ENCODE measurements at regions of chr22 and their contacts with region 1.

Region 1: GRCh38 chr22:20885557-20886323 is 26.9 kb downstream of the SNAP29 start:
- DNase-seq: peak; percentile 69 to 90
- H3K4me3 ChIP-seq: no peak overlapping the region
- H3K27ac ChIP-seq: no peak overlapping the region
- H3K4me1 ChIP-seq: peaks cover 0 to 2% (median 0%) of the 10 kb centered on the region in 4 experiments; a peak in 1 of 7 replicates
- H3K27me3 ChIP-seq: no peaks in the 10 kb centered on the region
- CTCF ChIP-seq: peak; percentile 97 to 100 (median 100)
- EP300 ChIP-seq: no peak
- POLR2A ChIP-seq: no peak
- RAD21 ChIP-seq: peak; percentile 95

Region 2: GRCh38 chr22:20803696-20804324 is 81.9 kb before region 1 on chr22:
- CTCF ChIA-PET with region 1: interaction called, 13 read pairs
- POLR2A ChIA-PET with region 1: no interaction called
- DNase-seq: peak; percentile 29 to 71
- H3K4me3 ChIP-seq: no peak overlapping the region
- H3K27ac ChIP-seq: no peak overlapping the region
- H3K4me1 ChIP-seq: no peaks in the 10 kb centered on the region; a peak in 1 of 7 replicates
- H3K27me3 ChIP-seq: no peaks in the 10 kb centered on the region
- CTCF ChIP-seq: peak; percentile 79 to 89 (median 80)
- EP300 ChIP-seq: no peak
- POLR2A ChIP-seq: no peak
- RAD21 ChIP-seq: peak; percentile 86 to 92

Region 3: GRCh38 chr22:20833225-20833665 is 52.5 kb before region 1 on chr22:
- CTCF ChIA-PET with region 1: no interaction called
- POLR2A ChIA-PET with region 1: no interaction called
- DNase-seq: no peak
- H3K4me3 ChIP-seq: no peak overlapping the region
- H3K27ac ChIP-seq: no peak overlapping the region
- H3K4me1 ChIP-seq: no peaks in the 10 kb centered on the region
- H3K27me3 ChIP-seq: no peaks in the 10 kb centered on the region
- CTCF ChIP-seq: no peak
- EP300 ChIP-seq: no peak
- POLR2A ChIP-seq: no peak
- RAD21 ChIP-seq: no peak

Region 4: GRCh38 chr22:20873214-20873613 is 12.5 kb before region 1 on chr22:
- CTCF ChIA-PET with region 1: interaction called, 21 read pairs
- POLR2A ChIA-PET with region 1: interaction called, 3 read pairs
- DNase-seq: no peak
- H3K4me3 ChIP-seq: no peak overlapping the region
- H3K27ac ChIP-seq: no peak overlapping the region
- H3K4me1 ChIP-seq: no peaks in the 10 kb centered on the region
- H3K27me3 ChIP-seq: no peaks in the 10 kb centered on the region
- CTCF ChIP-seq: no peak
- EP300 ChIP-seq: no peak
- POLR2A ChIP-seq: no peak
- RAD21 ChIP-seq: no peak

Region 5: GRCh38 chr22:20912494-20912893 is 26.8 kb after region 1 on chr22:
- CTCF ChIA-PET with region 1: interaction called, 22 read pairs
- POLR2A ChIA-PET with region 1: interaction called, 3 read pairs
- DNase-seq: no peak
- H3K4me3 ChIP-seq: no peak overlapping the region
- H3K27ac ChIP-seq: no peak overlapping the region
- H3K4me1 ChIP-seq: no peaks in the 10 kb centered on the region
- H3K27me3 ChIP-seq: no peaks in the 10 kb centered on the region
- CTCF ChIP-seq: no peak
- EP300 ChIP-seq: no peak
- POLR2A ChIP-seq: no peak
- RAD21 ChIP-seq: no peak

Region 6: DNA sequence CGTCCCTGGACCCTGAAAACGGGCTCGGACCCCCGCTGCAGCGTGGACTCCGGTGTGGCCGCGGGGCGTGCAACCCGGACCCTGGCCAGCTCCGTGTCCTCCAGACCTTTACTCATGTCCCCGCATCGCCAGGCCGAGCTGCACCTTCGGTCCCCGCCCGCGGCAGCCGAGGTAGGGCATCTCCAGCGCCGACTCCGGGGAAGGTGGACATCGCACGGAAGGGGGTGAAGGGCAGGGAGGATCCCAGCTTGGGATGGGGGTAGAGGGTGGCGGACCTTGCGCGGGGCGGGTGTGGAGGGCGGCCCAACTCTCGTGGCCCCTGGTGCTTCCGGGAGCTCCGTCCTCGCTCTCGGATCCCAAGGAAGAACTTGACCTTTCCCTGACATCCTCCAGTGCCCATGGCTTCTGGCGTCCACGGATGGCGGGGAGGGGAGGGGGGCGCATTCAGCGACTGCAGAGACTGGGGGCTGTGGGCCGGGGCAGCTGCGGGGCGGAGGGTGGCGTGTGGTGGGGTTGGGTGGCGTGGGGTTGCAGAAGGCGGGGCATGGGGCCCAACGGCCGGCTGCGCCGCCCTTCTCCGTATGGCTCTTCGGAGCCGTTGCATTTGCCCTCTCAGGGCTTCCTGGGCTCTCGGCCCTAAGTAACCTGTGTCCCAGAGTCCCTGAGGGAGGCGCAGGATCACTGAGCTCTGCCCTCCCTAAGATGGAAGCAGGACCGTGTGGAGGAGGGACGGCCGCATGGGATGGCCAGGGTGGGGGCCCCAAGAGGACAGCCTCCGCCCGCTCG is 71.8 kb after region 1 on chr22:
- CTCF ChIA-PET with region 1: interaction called, 12 read pairs
- POLR2A ChIA-PET with region 1: no interaction called
- DNase-seq: peak in 1 of 2 experiments; percentile 70
- H3K4me3 ChIP-seq: peak overlapping the region; percentile 68 to 79 (median 74)
- H3K27ac ChIP-seq: no peak overlapping the region
- H3K4me1 ChIP-seq: peaks cover 0 to 9% (median 5%) of the 10 kb centered on the region in 4 experiments; a peak in 6 of 7 replicates
- H3K27me3 ChIP-seq: peaks cover 0 to 9% (median 5%) of the 10 kb centered on the region in 4 experiments; a peak in 5 of 7 replicates
- CTCF ChIP-seq: no peak
- EP300 ChIP-seq: no peak
- POLR2A ChIP-seq: no peak
- RAD21 ChIP-seq: no peak

Region 7: DNA sequence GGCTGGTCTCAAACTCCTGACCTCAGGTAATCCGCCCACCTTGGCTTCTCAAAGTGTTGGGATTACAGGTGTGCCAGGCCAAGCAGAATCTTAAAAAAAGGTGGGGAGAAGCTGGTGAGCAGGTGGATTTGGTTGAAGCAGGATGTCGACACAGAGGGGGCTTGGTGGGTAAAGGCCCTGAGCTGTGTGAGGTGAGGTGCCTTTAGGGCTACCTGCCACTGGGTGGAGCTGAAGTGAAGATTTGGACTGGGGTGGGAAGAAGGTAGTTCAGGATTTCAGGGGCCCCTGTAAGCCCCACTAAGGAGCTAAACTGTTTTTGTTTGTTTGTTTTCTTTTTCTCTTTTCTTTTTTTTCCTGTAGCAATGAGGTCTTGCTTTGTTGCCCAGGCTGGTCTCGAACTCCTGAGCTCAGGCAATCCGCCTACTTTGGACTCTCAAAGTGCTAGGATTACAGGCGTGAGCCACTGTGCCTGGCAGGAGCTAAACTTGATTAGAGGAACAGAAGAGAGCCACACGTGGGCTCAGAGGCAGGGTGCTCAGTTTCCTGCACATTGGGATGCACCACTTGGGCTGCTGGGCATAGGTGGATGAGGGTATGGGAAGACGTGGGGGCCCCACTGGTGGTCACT is 135.2 kb after region 1 on chr22:
- CTCF ChIA-PET with region 1: interaction called, 13 read pairs
- POLR2A ChIA-PET with region 1: no interaction called
- DNase-seq: peak in 1 of 2 experiments; percentile 73
- H3K4me3 ChIP-seq: no peak overlapping the region
- H3K27ac ChIP-seq: no peak overlapping the region
- H3K4me1 ChIP-seq: no peaks in the 10 kb centered on the region
- H3K27me3 ChIP-seq: no peaks in the 10 kb centered on the region; a peak in 1 of 7 replicates
- CTCF ChIP-seq: peak; percentile 70 to 80 (median 74)
- EP300 ChIP-seq: no peak
- POLR2A ChIP-seq: no peak
- RAD21 ChIP-seq: peak; percentile 71 to 73

Region 8: GRCh38 chr22:21051493-21052415 is 166.0 kb after region 1 on chr22:
- CTCF ChIA-PET with region 1: no interaction called
- POLR2A ChIA-PET with region 1: no interaction called
- DNase-seq: no peak
- H3K4me3 ChIP-seq: no peak overlapping the region
- H3K27ac ChIP-seq: no peak overlapping the region
- H3K4me1 ChIP-seq: peaks cover 2 to 17% (median 12%) of the 10 kb centered on the region in 4 experiments; a peak in 5 of 7 replicates
- H3K27me3 ChIP-seq: no peaks in the 10 kb centered on the region
- CTCF ChIP-seq: no peak
- EP300 ChIP-seq: no peak
- POLR2A ChIP-seq: no peak
- RAD21 ChIP-seq: no peak

Region 9: DNA sequence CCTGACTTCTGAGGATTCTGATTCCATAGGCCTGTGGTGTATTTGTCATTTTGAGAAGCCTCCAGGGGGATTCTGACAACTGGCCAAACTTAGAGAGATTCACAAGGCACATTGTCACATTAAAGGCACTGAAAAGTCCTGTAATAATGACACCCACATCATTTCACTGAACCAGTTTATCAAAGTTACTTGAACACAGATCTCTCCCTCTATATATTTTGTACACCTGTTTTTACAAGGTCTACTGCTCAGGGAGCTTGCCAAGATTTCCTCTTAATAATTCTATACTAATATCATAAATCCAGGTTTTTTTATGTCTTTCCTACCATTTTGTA is 210.0 kb after region 1 on chr22:
- CTCF ChIA-PET with region 1: no interaction called
- POLR2A ChIA-PET with region 1: no interaction called
- DNase-seq: no peak
- H3K4me3 ChIP-seq: no peak overlapping the region
- H3K27ac ChIP-seq: no peak overlapping the region
- H3K4me1 ChIP-seq: no peaks in the 10 kb centered on the region
- H3K27me3 ChIP-seq: 0 out of 7 replicates have a peak, but pooled peaks cover 0 to 3% (median 0%) of the 10 kb centered on the region in 4 experiments
- CTCF ChIP-seq: no peak
- EP300 ChIP-seq: no peak
- POLR2A ChIP-seq: no peak
- RAD21 ChIP-seq: no peak